ENCODE measurements at regions of chr15 and their contacts with region 1.

Region 1: GRCh38 chr15:22978691-22979520 is 1.3 kb downstream of the CYFIP1 start:
- DNase-seq: no peak
- ATAC-seq: peak; percentile 83
- H3K4me3 ChIP-seq: peak overlapping the region; percentile 98
- H3K27ac ChIP-seq: no peak overlapping the region
- H3K4me1 ChIP-seq: peaks cover 11% of the 10 kb centered on the region
- H3K27me3 ChIP-seq: no peaks in the 10 kb centered on the region
- CTCF ChIP-seq: no peak
- EP300 ChIP-seq: no peak
- POLR2A ChIP-seq: no peak
- RAD21 ChIP-seq: no peak

Region 2: DNA sequence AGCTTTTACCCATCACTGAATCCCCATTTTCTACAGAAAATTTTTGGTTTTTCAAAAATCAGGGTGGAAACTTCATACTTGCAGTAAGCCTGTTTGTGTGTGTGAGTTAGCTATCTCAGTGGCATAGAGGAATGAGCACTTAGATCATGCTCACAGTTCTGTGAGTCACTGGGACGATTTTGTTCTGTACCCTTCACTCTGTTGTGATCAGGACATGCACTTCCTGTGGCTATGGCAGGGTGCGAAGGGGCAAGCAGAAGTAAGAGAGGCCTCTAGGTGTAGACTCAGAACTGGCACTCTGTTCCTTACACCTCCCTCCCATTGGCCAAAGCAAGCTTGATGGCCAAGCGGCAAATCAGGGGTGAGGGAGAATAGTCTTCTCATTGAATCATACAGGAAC is 128.9 kb before region 1 on chr15:
- CTCF ChIA-PET with region 1: no interaction called
- POLR2A ChIA-PET with region 1: no interaction called
- RAD21 ChIA-PET with region 1: no interaction called
- SMC1A ChIA-PET with region 1: no interaction called
- in situ Hi-C with region 1: no loop called
- intact Hi-C with region 1: loop called (anchors 10 kb)
- DNase-seq: no peak
- ATAC-seq: peak; percentile 63
- H3K4me3 ChIP-seq: no peak overlapping the region
- H3K27ac ChIP-seq: no peak overlapping the region
- H3K4me1 ChIP-seq: no peaks in the 10 kb centered on the region
- H3K27me3 ChIP-seq: no peaks in the 10 kb centered on the region
- CTCF ChIP-seq: no peak
- EP300 ChIP-seq: no peak
- POLR2A ChIP-seq: no peak
- RAD21 ChIP-seq: no peak

Region 3: GRCh38 chr15:22936577-22937472 is 42.1 kb before region 1 on chr15:
- CTCF ChIA-PET with region 1: no interaction called
- POLR2A ChIA-PET with region 1: no interaction called
- RAD21 ChIA-PET with region 1: no interaction called
- SMC1A ChIA-PET with region 1: no interaction called
- in situ Hi-C with region 1: no loop called
- intact Hi-C with region 1: loop called (anchors 5 kb)
- DNase-seq: peak; percentile 44
- ATAC-seq: peak; percentile 97
- H3K4me3 ChIP-seq: peak overlapping the region; percentile 35; the same call in 1 of the 2 replicates
- H3K27ac ChIP-seq: peak overlapping the region; percentile 47
- H3K4me1 ChIP-seq: peaks cover 17% of the 10 kb centered on the region
- H3K27me3 ChIP-seq: no peaks in the 10 kb centered on the region
- CTCF ChIP-seq: no peak
- EP300 ChIP-seq: no peak
- POLR2A ChIP-seq: no peak
- RAD21 ChIP-seq: no peak

Region 4: GRCh38 chr15:22989576-22990477 is 10.9 kb after region 1 on chr15:
- CTCF ChIA-PET with region 1: no interaction called
- POLR2A ChIA-PET with region 1: no interaction called
- RAD21 ChIA-PET with region 1: no interaction called
- SMC1A ChIA-PET with region 1: no interaction called
- in situ Hi-C with region 1: no loop called
- intact Hi-C with region 1: no loop called
- DNase-seq: no peak
- ATAC-seq: no peak
- H3K4me3 ChIP-seq: no peak overlapping the region
- H3K27ac ChIP-seq: no peak overlapping the region
- H3K4me1 ChIP-seq: no peaks in the 10 kb centered on the region
- H3K27me3 ChIP-seq: no peaks in the 10 kb centered on the region
- CTCF ChIP-seq: no peak
- EP300 ChIP-seq: no peak
- POLR2A ChIP-seq: no peak
- RAD21 ChIP-seq: no peak

Measured in GM12878 (cell line).